Right ventricle myocardium superior (tissue), 1 donor: ENCODE measurements at regions of chr16 and their contacts with region 1.

Region 1: DNA sequence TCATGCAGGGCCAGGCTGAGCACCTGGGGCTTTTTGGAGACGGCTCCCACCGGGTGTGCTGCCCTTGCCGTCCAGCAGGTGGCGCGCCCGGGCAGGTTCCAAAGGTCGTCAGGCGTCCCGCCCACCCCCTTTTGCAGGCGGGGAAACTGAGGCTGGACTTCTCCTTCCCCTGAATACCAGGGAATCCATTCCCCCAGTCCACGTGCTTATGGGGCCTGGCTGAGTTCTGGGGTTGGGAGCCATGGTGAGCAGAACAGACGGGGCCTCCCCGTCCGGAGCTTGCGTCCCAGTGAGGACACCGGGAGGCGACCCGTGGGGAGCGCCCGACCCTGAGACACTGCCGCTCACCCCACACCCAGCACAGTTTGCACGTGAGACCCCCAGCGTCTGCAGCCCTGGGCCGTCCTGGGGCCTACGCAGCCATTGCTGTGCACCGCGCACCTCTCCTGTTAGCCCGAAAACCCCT is 51.8 kb upstream of the JPH3 start:
- DNase-seq: peak; percentile 71
- ATAC-seq: peak; percentile 57

Region 2: GRCh38 chr16:87416826-87417527 is 133.6 kb before region 1 on chr16:
- intact Hi-C with region 1: loop called (anchors 10 kb)
- DNase-seq: peak; percentile 60
- ATAC-seq: no peak

Region 3: DNA sequence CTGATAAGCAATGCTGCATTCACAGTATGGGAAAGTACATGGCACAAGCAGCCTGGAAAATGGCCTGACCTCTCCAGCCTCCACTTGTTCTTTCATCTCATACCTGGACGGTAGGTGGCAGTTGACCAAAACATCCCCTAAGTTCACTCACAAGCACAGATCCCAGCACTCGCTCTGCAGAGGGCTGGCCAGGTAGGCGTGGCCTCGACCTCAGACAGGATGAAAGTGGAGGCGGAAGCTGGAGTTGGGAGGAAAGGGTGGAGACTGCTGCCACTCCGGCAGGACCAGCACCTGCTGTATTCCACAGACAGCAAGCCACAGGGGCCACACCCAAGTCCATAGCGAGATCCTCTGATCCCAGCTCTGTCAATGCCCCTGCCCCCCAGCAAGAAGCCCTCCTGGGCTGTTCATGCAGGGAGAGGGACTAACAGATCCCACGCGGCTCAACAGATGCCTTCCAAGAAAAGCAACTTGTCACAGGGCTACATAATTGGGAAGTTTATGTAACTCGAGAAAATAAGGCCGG is 89.0 kb before region 1 on chr16:
- intact Hi-C with region 1: no loop called
- DNase-seq: peak; percentile 72
- ATAC-seq: peak; percentile 43